Transverse colon (tissue), 4 donors: ENCODE measurements at regions of chr12 and their contacts with region 1.

Region 1: DNA sequence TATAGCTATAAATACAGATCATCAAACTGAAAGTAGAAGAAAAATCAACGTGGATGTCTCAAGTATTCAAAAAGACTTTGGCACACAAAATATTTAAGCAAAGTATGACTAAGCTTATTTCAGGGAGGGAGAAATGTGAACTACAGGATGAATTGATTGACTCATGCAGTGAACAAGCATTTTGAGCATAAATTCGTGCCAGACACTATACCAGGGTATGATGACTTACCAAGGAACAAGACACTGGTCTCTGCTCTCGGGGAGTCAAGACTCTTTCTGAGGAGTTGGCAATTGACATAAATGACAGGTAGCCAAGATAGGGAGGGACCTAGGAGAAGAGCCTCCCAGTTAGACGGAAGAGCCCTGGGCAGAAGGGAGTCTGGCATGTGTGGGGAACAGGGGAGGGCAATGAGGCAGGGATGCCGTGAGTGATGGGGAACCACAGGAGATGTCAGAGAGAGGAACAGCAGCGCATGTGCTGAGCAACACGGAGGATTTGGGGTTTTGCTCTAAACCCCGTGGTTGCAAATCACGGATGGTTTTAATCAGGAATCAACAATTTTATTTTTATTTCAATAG is 115.2 kb downstream of the TMEM132D start:
- DNase-seq: no peak
- H3K4me3 ChIP-seq: no peak overlapping the region
- H3K27ac ChIP-seq: no peak overlapping the region
- H3K4me1 ChIP-seq: no peaks in the 10 kb centered on the region
- H3K27me3 ChIP-seq: no peaks in the 10 kb centered on the region
- CTCF ChIP-seq: no peak
- EP300 ChIP-seq: no peak
- POLR2A ChIP-seq: no peak

Region 2: GRCh38 chr12:129635021-129635685 is 153.4 kb before region 1 on chr12:
- in situ Hi-C with region 1: no loop called
- intact Hi-C with region 1: no loop called
- DNase-seq: no peak
- H3K4me3 ChIP-seq: no peak overlapping the region
- H3K27ac ChIP-seq: no peak overlapping the region
- H3K4me1 ChIP-seq: no peaks in the 10 kb centered on the region
- H3K27me3 ChIP-seq: no peaks in the 10 kb centered on the region
- CTCF ChIP-seq: no peak
- EP300 ChIP-seq: no peak
- POLR2A ChIP-seq: no peak

Region 3: DNA sequence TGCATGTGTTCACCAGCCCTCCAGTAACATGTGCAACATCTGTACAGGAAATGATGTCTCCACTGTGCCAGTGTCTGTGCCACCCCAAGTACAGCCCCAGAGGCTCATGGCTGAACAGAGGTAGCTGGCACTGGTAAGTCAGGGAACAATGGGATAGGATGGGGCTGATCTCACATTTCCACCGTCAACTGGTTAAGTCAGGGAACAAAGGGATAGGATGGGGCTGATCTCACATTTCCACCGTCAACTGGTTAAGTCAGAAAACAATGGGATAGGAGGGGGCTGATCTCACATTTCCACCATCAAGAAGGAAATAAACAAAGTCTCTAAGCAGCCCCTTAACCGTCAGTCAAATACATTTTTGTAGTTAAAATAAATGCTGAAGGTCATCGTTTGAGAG is 131.4 kb before region 1 on chr12:
- in situ Hi-C with region 1: no loop called
- intact Hi-C with region 1: loop called (anchors 2 kb)
- DNase-seq: no peak
- H3K4me3 ChIP-seq: no peak overlapping the region
- H3K27ac ChIP-seq: no peak overlapping the region
- H3K4me1 ChIP-seq: no peaks in the 10 kb centered on the region
- H3K27me3 ChIP-seq: no peaks in the 10 kb centered on the region
- CTCF ChIP-seq: no peak
- EP300 ChIP-seq: no peak
- POLR2A ChIP-seq: no peak